B cell (primary cell): ENCODE measurements at regions of chr1 and their contacts with region 1.

Region 1: GRCh38 chr1:156625436-156626078 is 6.3 kb downstream of the HAPLN2 start:
- DNase-seq: peak; percentile 86
- ATAC-seq: peak; percentile 75
- H3K4me3 ChIP-seq: peak overlapping the region in 4 of 5 experiments; percentile 19 to 50 (median 47)
- H3K4me3 Mint-ChIP-seq: peak overlapping the region; percentile 84
- H3K27ac ChIP-seq: no peak overlapping the region
- H3K27ac Mint-ChIP-seq: peak overlapping the region; percentile 2
- H3K4me1 ChIP-seq: peaks cover 22 to 26% of the 10 kb centered on the region in 2 donors
- H3K4me1 Mint-ChIP-seq: peaks cover 15% of the 10 kb centered on the region
- H3K27me3 ChIP-seq: peaks cover 2 to 66% (median 27%) of the 10 kb centered on the region in 4 experiments
- H3K27me3 Mint-ChIP-seq: peaks cover 49% of the 10 kb centered on the region
- CTCF ChIP-seq: peak; percentile 91

Region 2: GRCh38 chr1:156583821-156584622 is 41.5 kb before region 1 on chr1:
- CTCF ChIA-PET with region 1: interaction called, 13 read pairs
- POLR2A ChIA-PET with region 1: no interaction called
- intact Hi-C with region 1: no loop called
- DNase-seq: peak; percentile 88
- ATAC-seq: peak; percentile 60
- H3K4me3 ChIP-seq: peak overlapping the region in 1 of 5 experiments; percentile 64
- H3K4me3 Mint-ChIP-seq: peak overlapping the region; percentile 15
- H3K27ac ChIP-seq: peak overlapping the region; percentile 88 to 94
- H3K27ac Mint-ChIP-seq: peak overlapping the region; percentile 76
- H3K4me1 ChIP-seq: peaks cover 26 to 36% of the 10 kb centered on the region in 2 donors
- H3K4me1 Mint-ChIP-seq: peaks cover 32% of the 10 kb centered on the region
- H3K27me3 ChIP-seq: no peaks in the 10 kb centered on the region
- H3K27me3 Mint-ChIP-seq: no peaks in the 10 kb centered on the region
- CTCF ChIP-seq: peak; percentile 94

Region 3: DNA sequence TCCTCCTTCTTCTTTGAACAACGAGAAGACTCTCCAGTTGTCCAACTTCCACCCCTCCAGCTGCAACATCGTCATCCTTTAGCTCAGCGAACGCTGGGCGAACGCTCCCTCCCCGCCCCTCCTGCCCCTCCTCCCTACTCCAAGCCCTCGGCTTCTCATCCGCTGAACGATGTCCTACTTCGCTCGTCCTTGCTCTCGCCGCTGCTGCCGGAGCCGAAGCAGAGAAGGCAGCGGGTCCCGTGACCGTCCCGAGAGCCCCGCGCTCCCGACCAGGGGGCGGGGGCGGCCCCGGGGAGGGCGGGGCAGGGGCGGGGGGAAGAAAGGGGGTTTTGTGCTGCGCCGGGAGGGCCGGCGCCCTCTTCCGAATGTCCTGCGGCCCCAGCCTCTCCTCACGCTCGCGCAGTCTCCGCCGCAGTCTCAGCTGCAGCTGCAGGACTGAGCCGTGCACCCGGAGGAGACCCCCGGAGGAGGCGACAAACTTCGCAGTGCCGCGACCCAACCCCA is 16.3 kb after region 1 on chr1 and contains the start of gene BCAN:
- CTCF ChIA-PET with region 1: interaction called, 29 read pairs
- POLR2A ChIA-PET with region 1: no interaction called
- intact Hi-C with region 1: no loop called
- DNase-seq: peak; percentile 55
- ATAC-seq: peak; percentile 48
- H3K4me3 ChIP-seq: peak within 1 kb of the TSS in 4 of 5 experiments; percentile 2 to 50 (median 26)
- H3K4me3 Mint-ChIP-seq: peak within 1 kb of the TSS; percentile 80
- H3K27ac ChIP-seq: no peak within 1 kb of the TSS
- H3K27ac Mint-ChIP-seq: no peak within 1 kb of the TSS
- H3K4me1 ChIP-seq: peaks cover 24 to 28% of the 10 kb centered on the region in 2 donors
- H3K4me1 Mint-ChIP-seq: peaks cover 23% of the 10 kb centered on the region
- H3K27me3 ChIP-seq: peaks cover 0 to 80% (median 55%) of the 10 kb centered on the region in 4 experiments
- H3K27me3 Mint-ChIP-seq: peaks cover 79% of the 10 kb centered on the region
- CTCF ChIP-seq: no peak
- total RNA-seq, gene BCAN: not detected in 2 replicates

Region 4: GRCh38 chr1:156659994-156660751 is 34.6 kb after region 1 on chr1:
- CTCF ChIA-PET with region 1: interaction called, 173 read pairs
- POLR2A ChIA-PET with region 1: interaction called, 8 read pairs
- intact Hi-C with region 1: loop called (anchors 1 kb)
- DNase-seq: peak; percentile 92
- ATAC-seq: peak; percentile 83
- H3K4me3 ChIP-seq: no peak overlapping the region
- H3K4me3 Mint-ChIP-seq: peak overlapping the region; percentile 66
- H3K27ac ChIP-seq: no peak overlapping the region
- H3K27ac Mint-ChIP-seq: peak overlapping the region; percentile 69
- H3K4me1 ChIP-seq: peaks cover 78 to 89% of the 10 kb centered on the region in 2 donors
- H3K4me1 Mint-ChIP-seq: peaks cover 91% of the 10 kb centered on the region
- H3K27me3 ChIP-seq: peaks cover 0 to 30% (median 11%) of the 10 kb centered on the region in 4 experiments
- H3K27me3 Mint-ChIP-seq: peaks cover 25% of the 10 kb centered on the region
- CTCF ChIP-seq: peak; percentile 99

Region 5: GRCh38 chr1:156677616-156678596 is 52.3 kb after region 1 on chr1:
- CTCF ChIA-PET with region 1: interaction called, 89 read pairs
- POLR2A ChIA-PET with region 1: no interaction called
- intact Hi-C with region 1: loop called (anchors 1 kb)
- DNase-seq: peak; percentile 78
- ATAC-seq: no peak
- H3K4me3 ChIP-seq: peak overlapping the region in 1 of 5 experiments; percentile 24
- H3K4me3 Mint-ChIP-seq: peak overlapping the region; percentile 53
- H3K27ac ChIP-seq: no peak overlapping the region
- H3K27ac Mint-ChIP-seq: peak overlapping the region; percentile 57
- H3K4me1 ChIP-seq: peaks cover 25 to 32% of the 10 kb centered on the region in 2 donors
- H3K4me1 Mint-ChIP-seq: peaks cover 25% of the 10 kb centered on the region
- H3K27me3 ChIP-seq: peaks cover 0 to 83% (median 47%) of the 10 kb centered on the region in 4 experiments
- H3K27me3 Mint-ChIP-seq: peaks cover 52% of the 10 kb centered on the region
- CTCF ChIP-seq: peak; percentile 67

Region 6: DNA sequence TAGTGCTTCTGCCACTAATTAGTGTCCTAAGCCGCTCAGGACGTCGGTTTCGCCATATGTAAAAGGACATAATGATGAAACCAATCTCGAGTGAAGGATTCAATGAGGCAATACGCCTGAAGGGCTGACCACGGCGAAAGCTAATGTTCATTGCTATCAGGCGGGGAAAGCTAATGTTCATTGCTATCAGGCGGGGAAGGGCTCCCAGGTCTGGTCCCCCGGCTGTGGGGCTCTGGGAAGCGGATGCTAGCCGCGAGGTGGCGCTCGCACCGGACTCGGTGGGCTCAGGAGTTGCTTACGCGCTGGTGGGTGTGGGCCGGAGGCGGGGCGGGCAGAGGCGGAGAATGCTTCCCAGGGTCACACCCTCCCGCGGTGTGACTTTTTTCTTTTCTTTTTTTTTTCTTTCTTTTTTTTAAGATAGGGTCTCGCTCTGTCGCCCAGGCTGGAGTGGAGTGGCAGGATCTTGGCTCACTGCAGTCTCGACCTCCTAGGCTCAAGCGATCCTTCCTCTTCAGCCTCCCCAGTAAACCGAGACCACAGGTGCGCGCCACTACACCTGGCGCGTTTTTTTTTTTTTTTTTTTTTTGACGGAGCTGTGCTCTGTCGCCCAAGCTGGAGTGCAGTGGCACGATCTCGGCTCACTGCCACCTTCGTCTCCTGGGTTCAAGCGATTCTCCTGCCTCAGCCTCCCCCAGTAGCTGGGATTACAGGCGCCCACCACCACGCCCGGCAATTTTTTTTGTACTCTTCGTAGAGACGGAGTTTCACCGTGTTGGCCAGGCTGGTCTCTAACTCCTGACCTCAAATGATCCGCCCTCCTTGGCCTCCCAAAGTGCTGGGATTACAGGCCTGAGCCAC is 266.9 kb after region 1 on chr1:
- CTCF ChIA-PET with region 1: interaction called, 6 read pairs
- POLR2A ChIA-PET with region 1: interaction called, 5 read pairs
- intact Hi-C with region 1: loop called (anchors 2 kb)
- DNase-seq: peak; percentile 83
- ATAC-seq: peak; percentile 85
- H3K4me3 ChIP-seq: peak overlapping the region in 2 of 5 experiments; percentile 2 to 17
- H3K4me3 Mint-ChIP-seq: peak overlapping the region; percentile 78
- H3K27ac ChIP-seq: no peak overlapping the region
- H3K27ac Mint-ChIP-seq: no peak overlapping the region
- H3K4me1 ChIP-seq: peaks cover 21 to 24% of the 10 kb centered on the region in 2 donors
- H3K4me1 Mint-ChIP-seq: peaks cover 15% of the 10 kb centered on the region
- H3K27me3 ChIP-seq: peaks cover 0 to 66% (median 28%) of the 10 kb centered on the region in 4 experiments
- H3K27me3 Mint-ChIP-seq: peaks cover 68% of the 10 kb centered on the region
- CTCF ChIP-seq: peak; percentile 76